ENCODE measurements at regions of chr4 and their contacts with region 1.

Region 1: GRCh38 chr4:184745831-184746795 is 12.2 kb upstream of the CENPU start:
- DNase-seq: peak; percentile 37 to 82 (median 76)
- ATAC-seq: peak; percentile 93
- H3K4me3 ChIP-seq: no peak overlapping the region
- H3K4me3 Mint-ChIP-seq: peak overlapping the region; percentile 18 to 73 (median 54)
- H3K27ac ChIP-seq: peak overlapping the region; percentile 30
- H3K27ac Mint-ChIP-seq: peak overlapping the region; percentile 58 to 90 (median 88)
- H3K4me1 ChIP-seq: peaks cover 0 to 14% of the 10 kb centered on the region in 2 donors
- H3K4me1 Mint-ChIP-seq: peaks cover 16 to 20% (median 18%) of the 10 kb centered on the region in 7 donors
- H3K27me3 ChIP-seq: no peaks in the 10 kb centered on the region
- H3K27me3 Mint-ChIP-seq: peaks cover 0 to 3% (median 0%) of the 10 kb centered on the region in 5 donors

Region 2: GRCh38 chr4:184907216-184907615 is 161.1 kb after region 1 on chr4:
- CTCF ChIA-PET with region 1: interaction called, 4 read pairs
- POLR2A ChIA-PET with region 1: no interaction called
- intact Hi-C with region 1: loop called (anchors 1 kb)
- DNase-seq: peak in 3 of 9 donors; percentile 2 to 18 (median 4)
- ATAC-seq: no peak
- H3K4me3 ChIP-seq: no peak overlapping the region
- H3K4me3 Mint-ChIP-seq: no peak overlapping the region
- H3K27ac ChIP-seq: no peak overlapping the region
- H3K27ac Mint-ChIP-seq: peak overlapping the region in 1 of 9 donors; percentile 10
- H3K4me1 ChIP-seq: no peaks in the 10 kb centered on the region
- H3K4me1 Mint-ChIP-seq: peaks cover 0 to 11% (median 7%) of the 10 kb centered on the region in 7 donors
- H3K27me3 ChIP-seq: no peaks in the 10 kb centered on the region
- H3K27me3 Mint-ChIP-seq: peaks cover 0 to 6% (median 2%) of the 10 kb centered on the region in 5 donors

Region 3: GRCh38 chr4:185005216-185005819 is 259.2 kb after region 1 on chr4:
- CTCF ChIA-PET with region 1: interaction called, 3 read pairs
- POLR2A ChIA-PET with region 1: no interaction called
- intact Hi-C with region 1: loop called (anchors 1 kb)
- DNase-seq: peak; percentile 45 to 78 (median 66)
- ATAC-seq: peak; percentile 93
- H3K4me3 ChIP-seq: peak overlapping the region; percentile 2
- H3K4me3 Mint-ChIP-seq: peak overlapping the region; percentile 25 to 71 (median 60)
- H3K27ac ChIP-seq: no peak overlapping the region
- H3K27ac Mint-ChIP-seq: peak overlapping the region in 1 of 9 donors; percentile 8
- H3K4me1 ChIP-seq: peaks cover 0 to 3% of the 10 kb centered on the region in 2 donors
- H3K4me1 Mint-ChIP-seq: peaks cover 6 to 9% (median 7%) of the 10 kb centered on the region in 7 donors
- H3K27me3 ChIP-seq: no peaks in the 10 kb centered on the region
- H3K27me3 Mint-ChIP-seq: peaks cover 47 to 54% (median 52%) of the 10 kb centered on the region in 5 donors

Region 4: GRCh38 chr4:185096032-185096653 is 350.0 kb after region 1 on chr4:
- CTCF ChIA-PET with region 1: interaction called, 5 read pairs
- POLR2A ChIA-PET with region 1: no interaction called
- intact Hi-C with region 1: loop called in 1 of 2 experiments (anchors 1 kb)
- DNase-seq: peak in 6 of 9 donors; percentile 16 to 39 (median 27)
- ATAC-seq: peak; percentile 27
- H3K4me3 ChIP-seq: no peak overlapping the region
- H3K4me3 Mint-ChIP-seq: no peak overlapping the region
- H3K27ac ChIP-seq: no peak overlapping the region
- H3K27ac Mint-ChIP-seq: no peak overlapping the region
- H3K4me1 ChIP-seq: no peaks in the 10 kb centered on the region
- H3K4me1 Mint-ChIP-seq: no peaks in the 10 kb centered on the region
- H3K27me3 ChIP-seq: no peaks in the 10 kb centered on the region
- H3K27me3 Mint-ChIP-seq: peaks cover 9 to 30% (median 14%) of the 10 kb centered on the region in 5 donors

Measured in naive thymus-derived CD4-positive, alpha-beta T cell (primary cell).